ENCODE measurements at regions of chr6 and their contacts with region 1.

Region 1: GRCh38 chr6:109229536-109229935 is 134.2 kb downstream of the CEP57L1 start:
- DNase-seq: peak; percentile 93
- ATAC-seq: peak; percentile 100
- H3K4me3 ChIP-seq: no peak overlapping the region
- H3K27ac ChIP-seq: peak overlapping the region; percentile 79
- H3K4me1 ChIP-seq: peaks cover 25% of the 10 kb centered on the region
- H3K27me3 ChIP-seq: no peaks in the 10 kb centered on the region
- CTCF ChIP-seq: no peak

Region 2: GRCh38 chr6:109095027-109095834 is 134.3 kb before region 1 on chr6 and contains the start of gene CEP57L1:
- CTCF ChIA-PET with region 1: no interaction called
- POLR2A ChIA-PET with region 1: no interaction called
- intact Hi-C with region 1: no loop called
- DNase-seq: peak; percentile 92
- ATAC-seq: peak; percentile 66
- H3K4me3 ChIP-seq: peak within 1 kb of the TSS; percentile 91
- H3K27ac ChIP-seq: peak within 1 kb of the TSS; percentile 88
- H3K4me1 ChIP-seq: peaks cover 13% of the 10 kb centered on the region; the same call in 1 of the 2 replicates
- H3K27me3 ChIP-seq: no peaks in the 10 kb centered on the region
- CTCF ChIP-seq: no peak
- total RNA-seq, gene CEP57L1: 19.8 and 26.4 TPM in 2 replicates

Region 3: GRCh38 chr6:109197061-109197460 is 32.5 kb before region 1 on chr6:
- CTCF ChIA-PET with region 1: no interaction called
- POLR2A ChIA-PET with region 1: no interaction called
- intact Hi-C with region 1: loop called (anchors 2 kb)
- DNase-seq: no peak
- ATAC-seq: peak; percentile 53
- H3K4me3 ChIP-seq: no peak overlapping the region
- H3K27ac ChIP-seq: peak overlapping the region; percentile 75
- H3K4me1 ChIP-seq: peaks cover 14% of the 10 kb centered on the region
- H3K27me3 ChIP-seq: no peaks in the 10 kb centered on the region
- CTCF ChIP-seq: no peak